CD8-positive, alpha-beta T cell (primary cell): ENCODE measurements at regions of chr22 and their contacts with region 1.

Region 1: DNA sequence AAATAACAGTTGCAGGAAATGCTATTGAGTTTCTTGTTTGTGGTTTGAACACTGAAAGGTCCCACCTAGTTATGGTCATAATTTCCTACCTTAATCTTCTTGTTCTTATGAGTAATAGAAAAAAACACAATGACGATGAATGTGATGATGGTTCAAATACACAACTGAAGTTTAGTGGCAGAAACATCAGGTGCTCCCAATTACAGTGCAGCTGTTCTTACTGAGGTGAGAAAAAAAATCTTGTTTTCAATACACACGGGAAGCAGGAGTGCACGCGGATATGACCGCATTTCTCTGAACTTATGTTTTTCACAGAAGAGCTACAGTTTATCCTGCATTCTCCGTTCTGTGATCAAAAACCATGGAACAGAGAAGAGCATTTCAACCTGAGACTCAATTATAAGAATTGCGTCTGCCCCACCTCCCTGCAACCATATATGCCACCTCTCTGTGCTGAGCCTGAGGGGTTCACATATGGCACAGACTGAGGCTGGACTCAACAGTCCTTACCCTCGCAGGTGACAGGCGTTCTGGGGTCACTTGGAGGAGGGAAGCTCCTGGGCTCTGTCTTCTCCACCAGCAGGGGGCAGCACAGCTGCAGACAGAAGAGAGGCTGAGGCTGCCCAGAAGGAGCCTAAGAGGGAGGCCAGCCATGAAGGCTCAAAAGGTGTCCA is 99.7 kb upstream of the IGLL5 start:
- DNase-seq: peak; percentile 35 to 86 (median 75)
- ATAC-seq: peak; percentile 80
- H3K4me3 ChIP-seq: no peak overlapping the region
- H3K4me3 Mint-ChIP-seq: no peak overlapping the region
- H3K27ac ChIP-seq: peak overlapping the region in 1 of 2 experiments; percentile 69
- H3K27ac Mint-ChIP-seq: peak overlapping the region; percentile 85
- H3K4me1 ChIP-seq: peaks cover 38% of the 10 kb centered on the region
- H3K4me1 Mint-ChIP-seq: peaks cover 54% of the 10 kb centered on the region
- H3K27me3 ChIP-seq: no peaks in the 10 kb centered on the region
- H3K27me3 Mint-ChIP-seq: no peaks in the 10 kb centered on the region
- CTCF ChIP-seq: peak; percentile 78

Region 2: DNA sequence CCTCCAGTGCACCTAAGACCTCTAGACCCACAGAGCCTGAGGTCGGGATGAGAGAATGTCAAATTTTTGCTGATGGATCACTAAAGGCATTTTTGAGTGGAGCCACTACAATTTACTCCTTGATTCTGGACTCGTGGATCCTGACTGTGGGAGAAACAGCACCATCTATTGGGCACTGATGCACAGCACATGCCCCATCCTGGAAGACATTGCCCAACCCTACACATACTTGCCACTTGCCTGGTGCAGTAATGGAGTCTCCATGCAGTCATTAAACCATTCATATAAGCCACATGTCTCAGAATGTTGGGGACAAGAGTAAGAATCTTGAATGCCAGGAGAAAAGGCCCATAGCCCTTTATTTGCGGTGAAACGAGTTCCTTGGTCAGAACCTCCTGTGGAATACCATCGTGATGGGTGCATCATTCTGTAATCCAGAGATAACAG is 39.6 kb before region 1 on chr22:
- CTCF ChIA-PET with region 1: interaction called, 153 read pairs
- POLR2A ChIA-PET with region 1: interaction called, 10 read pairs
- intact Hi-C with region 1: loop called in 1 of 2 experiments (anchors 5 kb)
- DNase-seq: peak in 5 of 9 experiments; percentile 22 to 77 (median 45)
- ATAC-seq: peak; percentile 52
- H3K4me3 ChIP-seq: no peak overlapping the region
- H3K4me3 Mint-ChIP-seq: no peak overlapping the region
- H3K27ac ChIP-seq: no peak overlapping the region
- H3K27ac Mint-ChIP-seq: peak overlapping the region; percentile 32
- H3K4me1 ChIP-seq: peaks cover 12% of the 10 kb centered on the region
- H3K4me1 Mint-ChIP-seq: peaks cover 35% of the 10 kb centered on the region
- H3K27me3 ChIP-seq: no peaks in the 10 kb centered on the region
- H3K27me3 Mint-ChIP-seq: peaks cover 8% of the 10 kb centered on the region
- CTCF ChIP-seq: peak; percentile 69

Region 3: DNA sequence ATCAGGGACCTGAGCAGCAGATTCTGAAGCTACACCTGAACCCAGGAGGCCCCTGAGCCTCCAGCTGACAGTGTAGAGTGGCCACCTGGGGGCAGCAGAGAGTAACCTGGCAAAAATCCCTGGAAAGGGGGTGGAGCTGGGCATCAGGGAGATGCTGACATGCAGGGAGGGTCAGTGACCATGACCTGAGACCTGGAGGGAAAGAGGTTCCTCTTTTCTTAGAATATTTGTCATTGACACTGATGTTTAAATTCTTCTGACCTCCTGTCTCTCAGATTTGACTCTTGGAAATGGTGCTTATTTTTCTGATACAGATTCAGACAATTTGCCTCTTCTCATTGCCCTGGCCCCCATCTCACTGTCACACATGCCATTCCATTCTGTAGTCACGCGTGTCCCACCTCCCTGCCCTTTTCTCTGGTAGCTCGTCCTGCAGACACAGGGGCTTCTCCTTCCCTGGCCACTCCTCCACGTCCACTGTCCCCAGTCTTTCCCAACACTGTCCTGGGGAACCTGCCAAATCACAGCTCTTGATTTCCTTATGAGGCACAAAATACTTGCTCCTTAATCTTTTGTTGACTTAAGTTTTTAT is 17.5 kb before region 1 on chr22:
- CTCF ChIA-PET with region 1: interaction called, 20 read pairs
- POLR2A ChIA-PET with region 1: interaction called, 3 read pairs
- intact Hi-C with region 1: no loop called
- DNase-seq: peak in 6 of 9 experiments; percentile 41 to 66 (median 59)
- ATAC-seq: peak; percentile 70
- H3K4me3 ChIP-seq: no peak overlapping the region
- H3K4me3 Mint-ChIP-seq: no peak overlapping the region
- H3K27ac ChIP-seq: peak overlapping the region in 1 of 2 experiments; percentile 60
- H3K27ac Mint-ChIP-seq: peak overlapping the region; percentile 73
- H3K4me1 ChIP-seq: no peaks in the 10 kb centered on the region
- H3K4me1 Mint-ChIP-seq: peaks cover 56% of the 10 kb centered on the region
- H3K27me3 ChIP-seq: no peaks in the 10 kb centered on the region
- H3K27me3 Mint-ChIP-seq: no peaks in the 10 kb centered on the region
- CTCF ChIP-seq: peak; percentile 74

Region 4: GRCh38 chr22:22818861-22819855 is 31.2 kb after region 1 on chr22:
- CTCF ChIA-PET with region 1: interaction called, 26 read pairs
- POLR2A ChIA-PET with region 1: interaction called, 26 read pairs
- intact Hi-C with region 1: no loop called
- DNase-seq: peak in 8 of 9 experiments; percentile 23 to 83 (median 56)
- ATAC-seq: peak; percentile 42
- H3K4me3 ChIP-seq: peak overlapping the region; percentile 50 to 51
- H3K4me3 Mint-ChIP-seq: peak overlapping the region; percentile 75
- H3K27ac ChIP-seq: peak overlapping the region; percentile 48 to 80
- H3K27ac Mint-ChIP-seq: peak overlapping the region; percentile 93
- H3K4me1 ChIP-seq: peaks cover 94% of the 10 kb centered on the region
- H3K4me1 Mint-ChIP-seq: peaks cover 98% of the 10 kb centered on the region
- H3K27me3 ChIP-seq: no peaks in the 10 kb centered on the region
- H3K27me3 Mint-ChIP-seq: no peaks in the 10 kb centered on the region
- CTCF ChIP-seq: no peak

Region 5: GRCh38 chr22:22865311-22866072 is 77.6 kb after region 1 on chr22:
- CTCF ChIA-PET with region 1: interaction called, 17 read pairs
- POLR2A ChIA-PET with region 1: interaction called, 3 read pairs
- intact Hi-C with region 1: no loop called
- DNase-seq: peak in 7 of 9 experiments; percentile 11 to 60 (median 34)
- ATAC-seq: peak; percentile 73
- H3K4me3 ChIP-seq: no peak overlapping the region
- H3K4me3 Mint-ChIP-seq: no peak overlapping the region
- H3K27ac ChIP-seq: peak overlapping the region in 1 of 2 experiments; percentile 17
- H3K27ac Mint-ChIP-seq: peak overlapping the region; percentile 55
- H3K4me1 ChIP-seq: peaks cover 30% of the 10 kb centered on the region
- H3K4me1 Mint-ChIP-seq: peaks cover 44% of the 10 kb centered on the region
- H3K27me3 ChIP-seq: no peaks in the 10 kb centered on the region
- H3K27me3 Mint-ChIP-seq: no peaks in the 10 kb centered on the region
- CTCF ChIP-seq: no peak

Region 6: GRCh38 chr22:22942511-22943329 is 154.8 kb after region 1 on chr22:
- CTCF ChIA-PET with region 1: interaction called, 9 read pairs
- POLR2A ChIA-PET with region 1: no interaction called
- intact Hi-C with region 1: loop called in 1 of 2 experiments (anchors 2 kb)
- DNase-seq: peak; percentile 52 to 83 (median 79)
- ATAC-seq: peak; percentile 78
- H3K4me3 ChIP-seq: no peak overlapping the region
- H3K4me3 Mint-ChIP-seq: no peak overlapping the region
- H3K27ac ChIP-seq: no peak overlapping the region
- H3K27ac Mint-ChIP-seq: peak overlapping the region; percentile 4
- H3K4me1 ChIP-seq: no peaks in the 10 kb centered on the region
- H3K4me1 Mint-ChIP-seq: peaks cover 2% of the 10 kb centered on the region
- H3K27me3 ChIP-seq: no peaks in the 10 kb centered on the region
- H3K27me3 Mint-ChIP-seq: no peaks in the 10 kb centered on the region
- CTCF ChIP-seq: peak; percentile 76

Region 7: DNA sequence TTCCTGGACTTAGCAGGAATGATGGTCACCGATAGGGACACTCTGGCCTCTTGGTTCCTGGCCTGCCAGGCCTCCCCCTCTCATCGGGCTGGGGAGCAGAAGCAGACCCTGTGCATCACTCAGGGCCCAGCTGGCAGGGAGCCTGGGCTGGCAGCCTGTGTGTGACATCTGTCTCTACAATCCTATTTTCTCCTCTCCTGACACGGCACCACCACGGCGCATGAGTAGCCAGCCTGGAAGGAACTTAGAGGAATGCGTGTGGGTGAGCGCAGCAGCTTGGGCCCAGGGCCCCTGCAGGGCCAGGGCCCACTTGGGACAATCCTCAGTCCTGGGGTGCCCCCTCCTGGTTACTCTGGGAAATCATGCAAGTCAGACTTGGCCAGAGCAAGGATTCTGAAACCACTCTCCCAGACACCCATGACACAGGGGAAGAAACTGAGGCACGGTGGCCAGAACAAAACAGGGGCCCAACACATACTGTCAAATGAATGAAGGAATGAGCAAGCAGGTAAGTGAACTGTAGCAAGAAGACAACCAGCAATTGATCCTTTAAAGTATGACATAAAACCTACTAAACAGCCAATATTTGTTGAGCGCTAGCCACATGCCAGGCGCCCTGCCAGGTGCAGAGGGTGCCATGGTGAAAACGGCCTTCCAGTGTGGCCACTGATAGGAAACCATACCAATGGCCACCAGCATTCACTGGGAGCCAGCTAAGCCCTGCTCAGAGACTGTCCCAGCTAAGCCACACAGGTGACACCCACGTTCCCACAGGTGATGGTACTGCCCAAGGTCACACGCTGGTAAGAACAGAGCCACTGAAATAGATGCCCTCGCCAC is 340.6 kb after region 1 on chr22:
- CTCF ChIA-PET with region 1: no interaction called
- POLR2A ChIA-PET with region 1: no interaction called
- intact Hi-C with region 1: no loop called
- DNase-seq: peak; percentile 45 to 87 (median 78)
- ATAC-seq: peak; percentile 95
- H3K4me3 ChIP-seq: no peak overlapping the region
- H3K4me3 Mint-ChIP-seq: no peak overlapping the region
- H3K27ac ChIP-seq: no peak overlapping the region
- H3K27ac Mint-ChIP-seq: no peak overlapping the region
- H3K4me1 ChIP-seq: no peaks in the 10 kb centered on the region
- H3K4me1 Mint-ChIP-seq: peaks cover 3% of the 10 kb centered on the region
- H3K27me3 ChIP-seq: no peaks in the 10 kb centered on the region
- H3K27me3 Mint-ChIP-seq: no peaks in the 10 kb centered on the region
- CTCF ChIP-seq: peak; percentile 78

Region 8: DNA sequence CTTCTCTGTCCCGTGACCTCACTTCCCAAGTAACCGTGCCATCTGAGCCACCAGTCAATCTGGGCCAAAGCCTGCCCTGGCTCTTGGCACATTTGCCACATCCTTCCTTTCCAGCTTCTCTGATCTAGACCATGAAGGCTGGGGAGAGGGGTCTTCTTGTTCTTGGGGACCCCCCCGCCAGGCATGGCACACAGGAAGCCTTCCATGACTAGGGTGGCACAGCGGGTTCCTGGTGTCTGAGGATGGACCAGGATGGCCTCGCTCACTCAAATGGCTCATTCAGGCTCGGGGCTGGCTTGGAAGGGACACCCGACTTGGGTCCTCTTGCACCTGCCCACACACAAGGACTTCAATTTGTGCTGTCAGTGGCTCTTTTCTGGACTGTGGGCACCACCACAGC is 513.7 kb after region 1 on chr22:
- CTCF ChIA-PET with region 1: no interaction called
- POLR2A ChIA-PET with region 1: no interaction called
- intact Hi-C with region 1: no loop called
- DNase-seq: no peak
- ATAC-seq: no peak
- H3K4me3 ChIP-seq: no peak overlapping the region
- H3K4me3 Mint-ChIP-seq: no peak overlapping the region
- H3K27ac ChIP-seq: no peak overlapping the region
- H3K27ac Mint-ChIP-seq: no peak overlapping the region
- H3K4me1 ChIP-seq: no peaks in the 10 kb centered on the region
- H3K4me1 Mint-ChIP-seq: no peaks in the 10 kb centered on the region
- H3K27me3 ChIP-seq: no peaks in the 10 kb centered on the region
- H3K27me3 Mint-ChIP-seq: no peaks in the 10 kb centered on the region
- CTCF ChIP-seq: no peak